ENCODE measurements at regions of chr15 and their contacts with region 1.

Region 1: GRCh38 chr15:32669896-32670619 is 28.5 kb downstream of the SCG5 start:
- DNase-seq: no peak
- H3K4me3 ChIP-seq: no peak overlapping the region
- H3K27ac ChIP-seq: peak overlapping the region; percentile 32 to 67 (median 52)
- H3K4me1 ChIP-seq: peaks cover 3 to 38% (median 31%) of the 10 kb centered on the region in 4 donors
- H3K27me3 ChIP-seq: no peaks in the 10 kb centered on the region
- CTCF ChIP-seq: no peak
- EP300 ChIP-seq: no peak
- POLR2A ChIP-seq: no peak

Region 2: GRCh38 chr15:32824777-32825176 is 154.7 kb after region 1 on chr15:
- intact Hi-C with region 1: loop called (anchors 5 kb)
- DNase-seq: no peak
- H3K4me3 ChIP-seq: peak overlapping the region in 3 of 4 donors; percentile 20 to 32 (median 30)
- H3K27ac ChIP-seq: peak overlapping the region; percentile 57 to 67 (median 64)
- H3K4me1 ChIP-seq: peaks cover 0 to 45% (median 25%) of the 10 kb centered on the region in 4 donors
- H3K27me3 ChIP-seq: peaks cover 0 to 6% (median 0%) of the 10 kb centered on the region in 4 donors
- CTCF ChIP-seq: no peak
- EP300 ChIP-seq: no peak
- POLR2A ChIP-seq: no peak

Region 3: DNA sequence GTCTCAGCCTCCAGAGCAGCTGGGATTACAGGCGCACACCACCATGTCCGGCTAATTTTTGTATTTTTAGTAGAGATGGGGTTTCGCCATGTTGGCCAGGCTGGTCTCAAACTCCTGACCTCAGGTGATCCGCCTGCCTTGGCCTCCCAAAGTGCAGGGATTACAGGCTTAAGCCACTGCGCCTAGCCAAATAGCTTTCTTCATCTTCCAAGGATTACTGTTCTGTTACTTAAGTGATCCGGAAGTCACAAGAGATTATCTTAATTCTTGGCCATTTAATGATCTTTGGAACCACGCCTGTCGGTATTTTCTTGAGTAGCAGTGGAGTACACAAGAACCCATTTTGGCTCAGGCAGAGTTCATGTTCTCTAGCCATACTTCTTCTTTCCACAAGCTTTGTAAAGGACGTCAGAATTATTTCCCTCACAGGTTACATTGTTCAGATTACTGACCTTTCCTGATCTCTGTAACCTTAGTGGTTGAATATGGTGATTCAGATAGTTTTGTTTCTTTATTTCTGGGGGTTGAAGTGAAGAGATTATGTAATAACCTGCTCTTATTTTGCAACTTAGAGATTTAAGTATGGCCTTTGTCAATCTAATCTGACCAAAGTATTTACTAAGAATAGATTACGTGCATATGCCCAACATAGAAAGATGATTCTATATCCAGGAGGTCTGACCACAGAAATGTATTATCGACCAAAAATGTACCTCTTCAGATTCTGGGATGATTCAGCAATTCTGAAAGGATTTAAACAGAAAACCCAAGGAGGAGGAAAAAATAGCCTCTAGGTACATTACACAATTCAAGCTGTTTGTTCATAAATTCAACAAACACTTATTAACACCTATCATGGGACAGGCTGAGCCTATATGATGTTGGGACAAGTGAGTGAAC is 180.0 kb after region 1 on chr15:
- intact Hi-C with region 1: loop called (anchors 5 kb)
- DNase-seq: no peak
- H3K4me3 ChIP-seq: no peak overlapping the region
- H3K27ac ChIP-seq: no peak overlapping the region
- H3K4me1 ChIP-seq: peaks cover 0 to 3% (median 0%) of the 10 kb centered on the region in 4 donors
- H3K27me3 ChIP-seq: no peaks in the 10 kb centered on the region
- CTCF ChIP-seq: no peak
- EP300 ChIP-seq: no peak
- POLR2A ChIP-seq: no peak

Region 4: GRCh38 chr15:32994810-32995424 is 324.9 kb after region 1 on chr15:
- intact Hi-C with region 1: loop called (anchors 5 kb)
- DNase-seq: no peak
- H3K4me3 ChIP-seq: no peak overlapping the region
- H3K27ac ChIP-seq: no peak overlapping the region
- H3K4me1 ChIP-seq: peaks cover 0 to 31% (median 17%) of the 10 kb centered on the region in 4 donors
- H3K27me3 ChIP-seq: no peaks in the 10 kb centered on the region
- CTCF ChIP-seq: peak; percentile 69 to 75 (median 72)
- EP300 ChIP-seq: no peak
- POLR2A ChIP-seq: no peak